CD8-positive, alpha-beta memory T cell (primary cell): ENCODE measurements at regions of chr3 and their contacts with region 1.

Region 1: DNA sequence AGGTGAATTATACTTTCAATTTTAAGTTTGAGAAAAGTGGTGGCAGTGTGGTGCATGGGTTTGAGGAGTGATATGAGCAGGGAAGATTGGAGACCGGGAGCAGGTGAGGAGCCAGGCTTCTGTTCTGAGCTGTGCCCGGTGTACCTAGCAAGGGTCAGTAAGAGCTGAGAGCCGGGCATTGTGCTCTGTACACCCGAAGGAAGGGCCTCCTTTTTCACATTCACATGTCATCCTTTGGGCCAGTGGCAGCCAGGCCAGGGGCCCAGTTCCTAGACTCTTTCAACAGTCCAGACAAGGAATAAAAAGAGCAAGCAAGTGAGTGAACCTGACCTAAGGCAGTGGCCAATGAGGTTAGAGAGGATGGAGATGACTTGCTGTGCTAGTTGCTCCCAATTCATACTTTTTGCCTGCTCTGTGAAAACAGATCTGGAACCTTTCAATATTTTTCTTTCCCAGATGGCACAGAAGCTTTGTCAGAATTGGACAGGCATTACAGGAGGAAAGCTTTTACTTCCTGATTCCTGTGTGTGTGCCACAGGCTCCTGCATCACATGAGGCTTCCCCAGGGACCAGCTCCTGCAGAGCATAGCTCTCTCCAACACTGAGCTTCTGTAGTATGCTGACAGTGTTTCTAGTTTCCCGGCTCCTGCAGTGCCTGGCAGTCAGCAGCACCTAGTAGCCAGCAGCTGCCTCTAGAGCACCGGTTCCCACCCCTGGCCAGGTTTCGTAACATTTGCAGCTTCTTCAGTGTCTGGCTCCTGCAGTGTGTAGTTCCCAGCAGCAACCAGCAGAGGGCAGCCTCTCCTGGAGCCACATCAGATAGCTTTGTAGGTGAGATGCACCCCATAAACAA is 5.3 kb upstream of the TRA2B start:
- DNase-seq: peak; percentile 77 to 86 (median 79)
- H3K4me3 ChIP-seq: peak overlapping the region; percentile 26
- H3K4me3 Mint-ChIP-seq: peak overlapping the region; percentile 8 to 71 (median 55)
- H3K27ac ChIP-seq: no peak overlapping the region
- H3K27ac Mint-ChIP-seq: peak overlapping the region in 7 of 8 donors; percentile 5 to 74 (median 62)
- H3K4me1 ChIP-seq: peaks cover 7% of the 10 kb centered on the region
- H3K4me1 Mint-ChIP-seq: peaks cover 13 to 24% (median 18%) of the 10 kb centered on the region in 3 donors
- H3K27me3 ChIP-seq: no peaks in the 10 kb centered on the region
- H3K27me3 Mint-ChIP-seq: peaks cover 5 to 12% of the 10 kb centered on the region in 2 donors

Region 2: DNA sequence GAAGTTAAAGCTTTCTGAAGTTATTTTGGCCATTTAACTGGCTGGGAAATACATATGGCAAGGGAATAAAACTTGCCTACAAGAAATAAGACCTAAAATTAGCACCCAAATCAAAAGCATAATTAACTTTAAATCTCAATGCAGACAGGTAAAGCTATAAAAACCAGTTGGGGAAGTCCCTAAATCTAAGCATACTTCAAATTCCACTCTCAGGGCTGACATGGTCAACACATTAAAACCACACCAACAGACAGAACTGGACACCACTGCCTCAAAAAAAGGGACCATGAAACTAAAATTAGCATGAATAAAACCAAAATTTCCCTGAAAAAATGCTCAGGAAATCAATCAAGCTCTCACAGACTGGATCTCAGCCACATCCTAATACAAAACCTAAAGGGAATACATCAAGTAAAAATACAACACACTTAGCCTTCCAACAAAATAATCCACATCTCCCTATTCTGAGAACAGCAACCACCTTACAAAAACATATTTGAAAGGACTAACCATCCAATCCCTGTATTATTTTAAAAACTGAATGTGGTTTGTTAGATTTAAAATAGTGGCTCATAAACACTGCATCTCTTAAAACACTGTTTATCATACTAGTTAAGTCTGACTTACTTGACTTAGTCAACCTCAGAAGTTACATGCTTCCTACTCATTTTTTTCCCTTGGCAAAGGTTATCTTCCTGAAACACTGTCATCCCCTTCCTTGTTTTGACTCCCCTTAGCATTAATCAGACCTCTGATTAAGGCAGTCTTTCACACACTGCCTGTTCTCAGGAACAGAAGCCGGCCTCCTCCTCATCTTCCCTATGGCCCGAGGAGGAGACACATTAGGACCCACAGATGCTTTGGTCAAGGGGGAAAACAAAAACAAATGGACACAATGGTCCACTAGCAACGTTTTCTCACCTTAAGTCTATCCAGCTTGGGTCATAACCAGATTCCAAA is 13.7 kb before region 1 on chr3:
- CTCF ChIA-PET with region 1: interaction called, 44 read pairs
- POLR2A ChIA-PET with region 1: interaction called, 22 read pairs
- DNase-seq: no peak
- H3K4me3 ChIP-seq: peak overlapping the region; percentile 9
- H3K4me3 Mint-ChIP-seq: peak overlapping the region; percentile 68 to 100 (median 96)
- H3K27ac ChIP-seq: no peak overlapping the region
- H3K27ac Mint-ChIP-seq: peak overlapping the region; percentile 48 to 82 (median 62)
- H3K4me1 ChIP-seq: peaks cover 86% of the 10 kb centered on the region
- H3K4me1 Mint-ChIP-seq: peaks cover 96 to 100% (median 100%) of the 10 kb centered on the region in 3 donors
- H3K27me3 ChIP-seq: no peaks in the 10 kb centered on the region
- H3K27me3 Mint-ChIP-seq: no peaks in the 10 kb centered on the region

Region 3: GRCh38 chr3:185956244-185956643 is 13.1 kb after region 1 on chr3:
- CTCF ChIA-PET with region 1: interaction called, 47 read pairs
- POLR2A ChIA-PET with region 1: no interaction called
- DNase-seq: no peak
- H3K4me3 ChIP-seq: no peak overlapping the region
- H3K4me3 Mint-ChIP-seq: no peak overlapping the region
- H3K27ac ChIP-seq: no peak overlapping the region
- H3K27ac Mint-ChIP-seq: no peak overlapping the region
- H3K4me1 ChIP-seq: peaks cover 11% of the 10 kb centered on the region
- H3K4me1 Mint-ChIP-seq: no peaks in the 10 kb centered on the region
- H3K27me3 ChIP-seq: no peaks in the 10 kb centered on the region
- H3K27me3 Mint-ChIP-seq: peaks cover 26 to 59% of the 10 kb centered on the region in 2 donors

Region 4: DNA sequence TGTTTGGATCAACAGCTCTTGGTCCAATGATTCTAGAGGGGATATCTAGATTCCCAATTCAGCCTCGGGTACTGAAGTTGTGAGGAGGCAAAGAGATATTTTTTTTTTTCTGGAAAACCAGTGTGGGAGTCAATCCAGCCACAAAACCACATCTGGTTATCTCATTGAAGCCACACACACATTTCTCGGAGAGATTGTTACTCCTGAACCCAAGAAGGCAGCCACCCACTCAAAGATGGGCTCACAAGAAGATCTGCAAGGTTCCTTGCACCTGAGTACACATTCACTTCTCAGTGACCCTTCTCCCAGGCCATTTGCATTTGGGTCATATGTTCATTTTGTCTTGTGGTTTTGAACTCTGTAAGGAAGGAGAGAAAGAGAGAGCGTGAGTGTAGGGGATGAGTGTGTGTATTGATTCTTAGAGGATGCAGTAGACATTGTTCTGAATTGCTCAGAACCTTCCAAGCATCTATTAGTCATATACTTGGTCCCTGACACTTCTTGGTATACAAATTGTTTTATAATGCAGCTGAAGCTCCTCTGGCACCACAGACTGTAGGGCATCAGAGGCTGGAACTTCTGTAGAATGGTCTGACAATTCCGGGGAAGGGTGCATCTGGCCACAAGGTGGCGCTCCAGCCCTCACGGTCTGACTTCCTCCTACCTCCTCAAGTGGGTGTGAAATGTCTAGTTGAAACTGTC is 34.0 kb after region 1 on chr3:
- CTCF ChIA-PET with region 1: interaction called, 20 read pairs
- POLR2A ChIA-PET with region 1: interaction called, 5 read pairs
- DNase-seq: peak; percentile 55 to 82 (median 67)
- H3K4me3 ChIP-seq: no peak overlapping the region
- H3K4me3 Mint-ChIP-seq: no peak overlapping the region
- H3K27ac ChIP-seq: no peak overlapping the region
- H3K27ac Mint-ChIP-seq: no peak overlapping the region
- H3K4me1 ChIP-seq: peaks cover 5% of the 10 kb centered on the region
- H3K4me1 Mint-ChIP-seq: peaks cover 6 to 9% (median 9%) of the 10 kb centered on the region in 3 donors
- H3K27me3 ChIP-seq: no peaks in the 10 kb centered on the region
- H3K27me3 Mint-ChIP-seq: no peaks in the 10 kb centered on the region